ENCODE measurements at regions of chr20 and their contacts with region 1.

Region 1: GRCh38 chr20:62156592-62157386 is 13.2 kb downstream of the SS18L1 start:
- DNase-seq: peak; percentile 75 to 89 (median 89)
- H3K4me3 ChIP-seq: no peak overlapping the region
- H3K27ac ChIP-seq: no peak overlapping the region
- H3K4me1 ChIP-seq: peaks cover 0 to 6% (median 2%) of the 10 kb centered on the region in 4 experiments
- H3K27me3 ChIP-seq: no peaks in the 10 kb centered on the region

Region 2: GRCh38 chr20:62025832-62026563 is 130.8 kb before region 1 on chr20:
- CTCF ChIA-PET with region 1: interaction called, 11 read pairs
- POLR2A ChIA-PET with region 1: no interaction called
- DNase-seq: peak; percentile 68 to 84 (median 82)
- H3K4me3 ChIP-seq: peak overlapping the region in 4 of 7 experiments; percentile 15 to 57 (median 26)
- H3K27ac ChIP-seq: peak overlapping the region; percentile 34 to 56
- H3K4me1 ChIP-seq: peaks cover 0 to 35% (median 25%) of the 10 kb centered on the region in 4 experiments
- H3K27me3 ChIP-seq: no peaks in the 10 kb centered on the region

Region 3: DNA sequence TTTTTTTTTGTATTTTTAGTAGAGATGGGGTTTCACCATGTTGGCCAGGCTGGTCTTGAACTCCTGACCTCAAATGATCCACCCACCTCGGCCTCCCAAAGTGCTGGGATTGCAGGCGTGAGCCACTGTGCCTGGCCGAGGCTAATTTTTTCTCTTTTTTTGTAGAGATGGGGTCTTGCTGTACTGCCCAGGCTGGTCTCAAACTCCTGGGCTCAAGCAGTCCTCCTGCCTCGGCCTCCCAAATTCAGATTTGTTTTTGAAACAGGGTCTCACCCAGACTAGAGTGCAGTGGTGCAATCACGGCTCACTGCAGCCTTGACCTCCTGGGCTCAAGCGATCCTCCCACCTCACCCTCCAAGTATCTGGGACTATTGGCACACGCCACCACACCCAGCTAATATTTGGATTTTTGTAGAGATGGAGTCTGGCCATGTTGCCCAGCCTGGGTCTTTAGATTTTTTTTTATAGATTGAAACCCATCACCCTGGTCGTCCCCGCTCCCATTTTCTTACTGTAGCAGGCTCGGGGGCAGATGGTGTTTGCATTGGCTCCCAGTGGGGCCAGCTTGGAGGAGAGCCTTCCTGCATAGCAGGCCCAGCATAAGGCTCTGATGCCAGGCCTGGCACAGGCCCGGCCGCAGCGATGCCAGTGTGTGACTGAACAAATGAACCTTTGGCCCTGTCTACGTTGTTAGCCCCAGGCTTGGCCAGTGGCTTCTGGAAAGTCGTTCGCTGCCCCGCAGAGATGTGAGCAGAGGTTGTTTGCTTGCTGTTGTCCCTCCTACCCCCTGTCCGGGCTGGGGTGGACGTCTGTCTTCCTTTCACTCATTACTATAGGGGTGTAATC is 21.8 kb after region 1 on chr20:
- CTCF ChIA-PET with region 1: no interaction called
- POLR2A ChIA-PET with region 1: no interaction called
- DNase-seq: no peak
- H3K4me3 ChIP-seq: no peak overlapping the region
- H3K27ac ChIP-seq: no peak overlapping the region
- H3K4me1 ChIP-seq: peaks cover 6 to 15% (median 10%) of the 10 kb centered on the region in 4 experiments
- H3K27me3 ChIP-seq: no peaks in the 10 kb centered on the region

Measured in common myeloid progenitor, CD34-positive (primary cell).